ENCODE measurements at regions of chr13 and their contacts with region 1.

Region 1: DNA sequence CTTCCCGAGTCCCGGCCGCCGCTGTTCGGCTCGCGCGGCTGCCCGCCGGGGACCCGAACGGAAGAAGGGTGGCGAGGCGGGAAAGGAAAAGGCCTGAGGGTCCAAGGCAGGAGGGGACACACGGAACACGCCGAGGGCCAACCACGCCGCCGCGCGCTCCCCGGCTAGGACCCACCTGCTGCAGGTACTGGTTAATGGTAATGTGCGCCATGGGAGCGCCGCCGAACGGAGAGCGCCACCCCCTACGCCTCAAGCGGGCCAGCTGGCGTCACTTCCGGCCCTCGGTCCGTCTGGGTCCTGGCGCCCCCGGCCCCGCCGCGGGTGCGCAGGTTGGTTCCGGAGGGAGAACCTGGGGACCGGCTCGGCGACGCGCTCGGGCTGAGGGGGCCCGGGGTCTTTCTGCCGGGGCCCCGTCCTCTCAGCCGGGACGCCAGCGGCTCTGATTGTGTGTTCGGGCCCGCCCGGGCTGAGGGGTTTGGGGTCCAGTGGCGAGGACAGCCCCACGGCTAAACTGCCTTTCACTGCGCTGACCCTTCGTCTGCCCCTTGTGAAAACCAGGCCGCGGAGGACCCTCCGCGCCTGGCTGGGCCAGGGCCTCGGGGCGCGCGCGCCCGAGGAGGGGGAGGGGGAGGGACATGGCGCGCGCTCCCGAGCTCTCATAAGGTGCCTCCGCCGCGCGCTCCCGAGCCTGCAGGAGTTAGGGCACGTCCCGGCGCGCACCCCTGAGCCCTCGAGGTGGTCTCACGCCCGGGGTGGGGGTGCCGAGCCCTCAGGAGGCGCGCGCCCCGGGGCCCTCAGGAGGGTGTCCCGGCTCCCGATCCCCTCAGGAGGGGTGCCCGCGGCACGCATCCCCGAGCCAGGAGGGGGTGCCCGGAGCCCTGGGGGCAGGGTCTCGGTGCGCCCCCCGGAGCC is at the start of gene PCID2:
- DNase-seq: no peak
- H3K4me3 ChIP-seq: peak within 1 kb of the TSS; percentile 78 to 98
- H3K27ac ChIP-seq: peak within 1 kb of the TSS; percentile 99
- H3K4me1 ChIP-seq: peaks cover 77% of the 10 kb centered on the region
- H3K27me3 ChIP-seq: no peaks in the 10 kb centered on the region
- CTCF ChIP-seq: no peak
- POLR2A ChIP-seq: peak in 1 of 2 donors; percentile 65
- total RNA-seq, gene PCID2: 44.9 TPM

Region 2: GRCh38 chr13:113274213-113274575 is 65.5 kb after region 1 on chr13:
- intact Hi-C with region 1: no loop called
- DNase-seq: no peak
- H3K4me3 ChIP-seq: no peak overlapping the region
- H3K27ac ChIP-seq: no peak overlapping the region
- H3K4me1 ChIP-seq: no peaks in the 10 kb centered on the region
- H3K27me3 ChIP-seq: no peaks in the 10 kb centered on the region
- CTCF ChIP-seq: no peak
- POLR2A ChIP-seq: no peak

Region 3: DNA sequence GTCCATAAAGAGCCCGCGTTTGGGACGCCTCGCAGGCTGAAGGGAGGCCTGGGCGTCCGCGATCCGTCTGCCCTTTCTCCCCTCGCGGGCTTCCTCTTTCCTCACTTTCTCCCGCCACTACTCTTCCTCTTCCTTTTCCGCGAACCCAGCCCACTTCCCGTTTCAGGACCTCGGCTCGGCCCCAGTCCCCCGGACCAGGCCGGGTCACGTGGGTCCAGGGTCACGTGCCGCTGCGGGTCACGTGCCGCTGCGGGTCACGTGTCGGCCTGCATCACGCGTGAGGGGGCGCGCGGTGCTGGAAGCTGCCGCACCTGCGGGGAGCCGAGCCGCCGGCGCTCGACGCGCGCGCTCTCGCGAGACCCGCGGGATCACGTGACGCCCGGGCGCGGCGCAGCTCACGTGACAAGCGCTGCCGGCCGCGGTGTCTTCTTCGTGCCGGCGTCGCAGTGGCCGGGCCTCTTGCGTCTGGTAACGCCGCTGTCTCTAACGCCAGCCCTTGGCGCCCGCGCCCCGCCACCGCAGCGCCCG is 88.2 kb after region 1 on chr13 and contains the start of gene LAMP1:
- intact Hi-C with region 1: loop called (anchors 10 kb)
- DNase-seq: peak; percentile 97 to 98
- H3K4me3 ChIP-seq: peak within 1 kb of the TSS; percentile 91 to 98
- H3K27ac ChIP-seq: peak within 1 kb of the TSS; percentile 83
- H3K4me1 ChIP-seq: peaks cover 35% of the 10 kb centered on the region
- H3K27me3 ChIP-seq: no peaks in the 10 kb centered on the region
- CTCF ChIP-seq: peak in 1 of 3 experiments; percentile 8
- POLR2A ChIP-seq: peak in 1 of 2 donors; percentile 21
- total RNA-seq, gene LAMP1: 77.8 TPM

Measured in vagina (tissue), 2 donors.